B cell (primary cell): ENCODE measurements at regions of chr20 and their contacts with region 1.

Region 1: DNA sequence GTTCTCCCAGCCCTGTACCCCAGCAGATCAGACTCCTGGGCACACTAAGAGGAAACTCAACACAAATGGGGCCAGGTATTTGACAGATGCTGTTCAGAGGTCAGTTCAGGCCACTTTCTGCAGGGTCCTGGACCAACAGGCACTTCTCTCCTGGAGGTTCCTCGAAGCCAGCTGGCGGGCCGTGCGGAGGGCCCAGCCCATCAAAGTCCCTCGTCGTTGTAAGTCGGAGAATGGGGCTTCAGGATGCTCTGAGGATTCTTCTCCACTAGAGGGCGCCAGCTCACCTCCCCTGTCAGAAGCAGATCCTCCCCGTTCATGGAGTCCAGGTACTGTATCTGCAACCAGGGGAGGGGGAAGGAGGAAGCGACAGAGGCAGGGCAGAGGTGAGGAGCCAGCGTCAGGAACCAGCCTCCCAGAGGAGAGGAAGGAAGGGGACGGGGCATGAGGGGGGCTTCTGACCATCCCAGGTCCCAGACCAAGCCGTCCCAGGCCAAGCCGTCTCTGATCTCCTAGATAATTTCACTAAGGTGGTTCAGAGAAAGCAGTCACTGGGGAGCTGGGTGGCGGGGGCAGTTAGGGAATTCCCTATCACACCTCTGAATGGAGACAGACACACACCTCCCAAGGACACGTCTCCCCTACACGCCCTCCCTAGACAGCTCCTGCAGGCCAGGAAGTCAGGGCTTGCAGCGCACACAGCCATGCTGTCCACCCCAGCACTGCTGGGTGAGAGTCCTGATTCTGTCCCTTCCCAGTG is 11.7 kb upstream of the FAM83C start:
- DNase-seq: peak; percentile 90
- ATAC-seq: peak; percentile 86
- H3K4me3 ChIP-seq: no peak overlapping the region
- H3K4me3 Mint-ChIP-seq: no peak overlapping the region
- H3K27ac ChIP-seq: no peak overlapping the region
- H3K27ac Mint-ChIP-seq: no peak overlapping the region
- H3K4me1 ChIP-seq: peaks cover 0 to 7% of the 10 kb centered on the region in 2 donors
- H3K4me1 Mint-ChIP-seq: peaks cover 5% of the 10 kb centered on the region
- H3K27me3 ChIP-seq: no peaks in the 10 kb centered on the region
- H3K27me3 Mint-ChIP-seq: no peaks in the 10 kb centered on the region
- CTCF ChIP-seq: peak; percentile 85

Region 2: DNA sequence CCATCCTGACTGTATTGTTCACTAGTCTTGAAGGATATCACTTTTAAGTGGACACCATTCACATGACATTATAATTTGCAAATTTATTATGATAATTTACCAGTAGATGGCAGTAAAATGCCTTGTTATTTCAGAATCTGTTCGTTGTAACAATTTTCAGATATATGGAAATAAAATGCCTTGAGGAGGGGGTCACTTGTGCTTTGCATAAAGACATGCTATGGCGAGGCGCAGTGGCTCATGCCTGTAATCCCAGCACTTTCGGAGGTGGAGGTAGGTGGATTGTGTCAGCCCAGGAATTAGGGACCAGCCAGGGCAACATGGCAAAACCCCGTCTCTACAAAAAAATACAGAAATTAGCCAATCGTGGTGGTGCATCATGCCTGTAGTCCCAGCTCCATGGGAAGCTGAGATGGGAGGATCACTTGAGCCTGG is 469.4 kb before region 1 on chr20:
- CTCF ChIA-PET with region 1: interaction called, 18 read pairs
- POLR2A ChIA-PET with region 1: no interaction called
- intact Hi-C with region 1: loop called (anchors 10 kb)
- DNase-seq: peak; percentile 65
- ATAC-seq: no peak
- H3K4me3 ChIP-seq: no peak overlapping the region
- H3K4me3 Mint-ChIP-seq: no peak overlapping the region
- H3K27ac ChIP-seq: no peak overlapping the region
- H3K27ac Mint-ChIP-seq: peak overlapping the region; percentile 42
- H3K4me1 ChIP-seq: no peaks in the 10 kb centered on the region
- H3K4me1 Mint-ChIP-seq: peaks cover 1% of the 10 kb centered on the region
- H3K27me3 ChIP-seq: peaks cover 0 to 4% (median 0%) of the 10 kb centered on the region in 4 experiments
- H3K27me3 Mint-ChIP-seq: peaks cover 30% of the 10 kb centered on the region
- CTCF ChIP-seq: peak; percentile 77

Region 3: DNA sequence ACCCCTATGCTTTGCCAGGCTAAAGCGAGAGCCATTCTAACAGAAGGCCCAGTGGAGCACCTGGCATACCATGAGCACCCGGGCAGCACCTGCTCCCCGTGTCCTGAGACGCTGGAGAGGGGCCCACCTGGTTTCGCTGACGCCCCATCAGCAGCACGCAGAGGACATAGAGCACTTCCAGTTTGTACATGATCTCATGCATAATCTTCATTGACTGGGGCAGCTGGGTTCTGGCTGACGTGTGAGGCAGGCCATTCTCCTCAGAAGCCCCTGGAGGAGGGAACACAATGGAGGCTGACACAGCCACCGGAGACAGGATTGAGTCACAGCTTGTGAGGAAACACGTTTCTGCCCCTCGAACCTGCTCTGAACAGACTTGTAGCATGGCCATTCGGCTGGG is 282.9 kb before region 1 on chr20:
- CTCF ChIA-PET with region 1: no interaction called
- POLR2A ChIA-PET with region 1: no interaction called
- intact Hi-C with region 1: no loop called
- DNase-seq: no peak
- ATAC-seq: no peak
- H3K4me3 ChIP-seq: no peak overlapping the region
- H3K4me3 Mint-ChIP-seq: no peak overlapping the region
- H3K27ac ChIP-seq: no peak overlapping the region
- H3K27ac Mint-ChIP-seq: no peak overlapping the region
- H3K4me1 ChIP-seq: no peaks in the 10 kb centered on the region
- H3K4me1 Mint-ChIP-seq: peaks cover 3% of the 10 kb centered on the region
- H3K27me3 ChIP-seq: no peaks in the 10 kb centered on the region
- H3K27me3 Mint-ChIP-seq: no peaks in the 10 kb centered on the region
- CTCF ChIP-seq: no peak

Region 4: DNA sequence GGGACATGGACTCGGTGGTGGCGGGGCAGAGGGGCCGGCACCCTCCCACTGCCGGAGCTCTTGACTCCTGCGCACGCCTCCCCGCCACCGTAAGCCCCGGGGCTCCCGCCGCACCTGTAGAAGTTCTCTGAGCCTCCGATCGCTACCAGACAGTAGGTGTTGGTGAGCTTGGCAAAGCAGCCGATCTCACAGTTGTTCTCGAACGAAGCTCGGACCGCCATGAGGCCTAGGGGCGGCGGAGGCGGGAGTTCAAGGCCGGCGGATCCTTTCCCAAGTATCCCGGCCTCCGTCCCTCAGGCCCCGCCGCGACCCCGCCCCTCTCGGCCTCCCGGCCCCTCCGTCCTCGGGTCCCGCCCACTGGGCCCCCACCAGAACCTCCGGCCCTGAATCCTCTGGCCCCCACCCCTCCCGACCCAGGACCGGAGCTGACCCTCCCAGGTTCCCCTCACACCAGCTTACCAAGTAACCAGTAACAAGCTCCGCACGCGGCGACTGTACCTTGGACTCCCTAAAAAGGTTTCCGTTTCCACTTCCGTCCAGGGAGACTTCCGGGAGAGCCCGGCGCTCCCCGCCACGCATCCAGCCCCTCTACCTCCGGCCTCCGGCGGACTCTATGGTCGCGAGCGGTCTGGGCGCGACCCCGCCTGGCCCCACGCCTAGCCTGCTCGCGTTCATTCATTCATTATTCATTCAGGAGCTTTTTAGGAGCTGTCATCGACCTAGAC is 19.5 kb before region 1 on chr20 and contains the start of gene EIF6:
- CTCF ChIA-PET with region 1: interaction called, 20 read pairs
- POLR2A ChIA-PET with region 1: interaction called, 3 read pairs
- intact Hi-C with region 1: no loop called
- DNase-seq: peak; percentile 83
- ATAC-seq: peak; percentile 92
- H3K4me3 ChIP-seq: peak within 1 kb of the TSS; percentile 59 to 97 (median 93)
- H3K4me3 Mint-ChIP-seq: peak within 1 kb of the TSS; percentile 95
- H3K27ac ChIP-seq: peak within 1 kb of the TSS; percentile 71 to 90
- H3K27ac Mint-ChIP-seq: peak within 1 kb of the TSS; percentile 96
- H3K4me1 ChIP-seq: peaks cover 13 to 19% of the 10 kb centered on the region in 2 donors
- H3K4me1 Mint-ChIP-seq: peaks cover 32% of the 10 kb centered on the region
- H3K27me3 ChIP-seq: no peaks in the 10 kb centered on the region
- H3K27me3 Mint-ChIP-seq: no peaks in the 10 kb centered on the region
- CTCF ChIP-seq: no peak
- total RNA-seq, gene EIF6: 74.0 and 81.2 TPM in 2 replicates

Region 5: DNA sequence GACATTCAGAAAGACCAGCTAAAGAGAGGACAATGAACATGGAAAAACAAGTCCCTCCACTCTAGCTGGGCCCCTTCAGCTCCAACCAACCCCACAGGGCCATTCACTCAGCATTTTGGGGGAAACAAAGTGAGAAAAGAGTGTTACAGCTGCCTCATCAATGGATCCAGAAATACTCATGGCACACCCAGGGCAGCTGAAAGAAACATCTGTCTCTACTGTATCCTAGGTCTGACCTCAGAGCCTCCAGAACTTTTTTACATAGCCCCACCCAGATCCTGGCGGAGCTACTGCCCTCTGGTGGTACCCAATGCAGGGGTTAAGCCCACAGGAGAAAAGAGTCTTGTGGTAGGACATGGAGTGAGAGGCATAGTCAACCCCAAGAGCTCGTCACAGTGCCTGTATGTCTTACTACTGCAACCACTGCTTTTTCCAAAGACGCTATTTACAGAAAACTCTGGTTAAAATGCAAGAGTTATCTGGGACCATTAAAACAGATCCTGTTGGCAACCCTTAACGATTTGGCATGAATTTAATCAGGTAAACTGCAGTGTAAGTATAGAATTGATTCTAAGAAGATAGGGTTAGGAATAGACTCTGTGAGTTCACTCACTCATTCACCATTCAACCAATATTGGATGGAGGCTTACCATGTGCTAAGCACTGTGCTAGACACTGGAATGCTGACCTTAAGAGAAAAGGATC is 25.7 kb after region 1 on chr20:
- CTCF ChIA-PET with region 1: interaction called, 9 read pairs
- POLR2A ChIA-PET with region 1: no interaction called
- intact Hi-C with region 1: loop called (anchors 1 kb)
- DNase-seq: peak; percentile 25
- ATAC-seq: peak; percentile 28
- H3K4me3 ChIP-seq: no peak overlapping the region
- H3K4me3 Mint-ChIP-seq: no peak overlapping the region
- H3K27ac ChIP-seq: no peak overlapping the region
- H3K27ac Mint-ChIP-seq: no peak overlapping the region
- H3K4me1 ChIP-seq: no peaks in the 10 kb centered on the region
- H3K4me1 Mint-ChIP-seq: no peaks in the 10 kb centered on the region
- H3K27me3 ChIP-seq: no peaks in the 10 kb centered on the region
- H3K27me3 Mint-ChIP-seq: no peaks in the 10 kb centered on the region
- CTCF ChIP-seq: no peak

Region 6: GRCh38 chr20:35447082-35447789 is 143.3 kb after region 1 on chr20:
- CTCF ChIA-PET with region 1: interaction called, 63 read pairs
- POLR2A ChIA-PET with region 1: no interaction called
- intact Hi-C with region 1: loop called (anchors 1 kb)
- DNase-seq: peak; percentile 84
- ATAC-seq: peak; percentile 99
- H3K4me3 ChIP-seq: peak overlapping the region in 3 of 5 experiments; percentile 30 to 52 (median 31)
- H3K4me3 Mint-ChIP-seq: peak overlapping the region; percentile 87
- H3K27ac ChIP-seq: no peak overlapping the region
- H3K27ac Mint-ChIP-seq: no peak overlapping the region
- H3K4me1 ChIP-seq: peaks cover 0 to 3% of the 10 kb centered on the region in 2 donors
- H3K4me1 Mint-ChIP-seq: peaks cover 6% of the 10 kb centered on the region
- H3K27me3 ChIP-seq: no peaks in the 10 kb centered on the region
- H3K27me3 Mint-ChIP-seq: peaks cover 8% of the 10 kb centered on the region
- CTCF ChIP-seq: peak; percentile 97

Region 7: GRCh38 chr20:35883778-35884540 is 580.0 kb after region 1 on chr20:
- CTCF ChIA-PET with region 1: no interaction called
- POLR2A ChIA-PET with region 1: no interaction called
- intact Hi-C with region 1: loop called (anchors 5 kb)
- DNase-seq: peak; percentile 68
- ATAC-seq: peak; percentile 84
- H3K4me3 ChIP-seq: no peak overlapping the region
- H3K4me3 Mint-ChIP-seq: no peak overlapping the region
- H3K27ac ChIP-seq: peak overlapping the region in 1 of 2 donors; percentile 16
- H3K27ac Mint-ChIP-seq: peak overlapping the region; percentile 22
- H3K4me1 ChIP-seq: no peaks in the 10 kb centered on the region
- H3K4me1 Mint-ChIP-seq: peaks cover 7% of the 10 kb centered on the region
- H3K27me3 ChIP-seq: no peaks in the 10 kb centered on the region
- H3K27me3 Mint-ChIP-seq: no peaks in the 10 kb centered on the region
- CTCF ChIP-seq: peak; percentile 72